Activated naive CD8-positive, alpha-beta T cell treated with anti-CD3 and anti-CD28 coated beads, Interleukin-2, amount 10 ng/mL, durations not matched to agents 7 days and 5 days (primary cell): ENCODE measurements at regions of chr17 and their contacts with region 1.

Region 1: GRCh38 chr17:76726231-76726775 is at the start of gene JMJD6:
- DNase-seq: no peak
- ATAC-seq: peak; percentile 83
- H3K4me3 Mint-ChIP-seq: peak within 1 kb of the TSS; percentile 99
- H3K27ac Mint-ChIP-seq: peak within 1 kb of the TSS; percentile 99
- H3K4me1 Mint-ChIP-seq: peaks cover 38% of the 10 kb centered on the region
- H3K27me3 Mint-ChIP-seq: no peaks in the 10 kb centered on the region
- total RNA-seq, gene JMJD6: 55.0 to 58.9 TPM

Region 2: GRCh38 chr17:76671123-76671911 is 55.0 kb before region 1 on chr17:
- POLR2A ChIA-PET with region 1: interaction called, 12 read pairs
- DNase-seq: peak; percentile 97
- ATAC-seq: peak; percentile 99
- H3K4me3 Mint-ChIP-seq: peak overlapping the region; percentile 89
- H3K27ac Mint-ChIP-seq: peak overlapping the region; percentile 96
- H3K4me1 Mint-ChIP-seq: peaks cover 32% of the 10 kb centered on the region
- H3K27me3 Mint-ChIP-seq: peaks cover 2% of the 10 kb centered on the region

Region 3: DNA sequence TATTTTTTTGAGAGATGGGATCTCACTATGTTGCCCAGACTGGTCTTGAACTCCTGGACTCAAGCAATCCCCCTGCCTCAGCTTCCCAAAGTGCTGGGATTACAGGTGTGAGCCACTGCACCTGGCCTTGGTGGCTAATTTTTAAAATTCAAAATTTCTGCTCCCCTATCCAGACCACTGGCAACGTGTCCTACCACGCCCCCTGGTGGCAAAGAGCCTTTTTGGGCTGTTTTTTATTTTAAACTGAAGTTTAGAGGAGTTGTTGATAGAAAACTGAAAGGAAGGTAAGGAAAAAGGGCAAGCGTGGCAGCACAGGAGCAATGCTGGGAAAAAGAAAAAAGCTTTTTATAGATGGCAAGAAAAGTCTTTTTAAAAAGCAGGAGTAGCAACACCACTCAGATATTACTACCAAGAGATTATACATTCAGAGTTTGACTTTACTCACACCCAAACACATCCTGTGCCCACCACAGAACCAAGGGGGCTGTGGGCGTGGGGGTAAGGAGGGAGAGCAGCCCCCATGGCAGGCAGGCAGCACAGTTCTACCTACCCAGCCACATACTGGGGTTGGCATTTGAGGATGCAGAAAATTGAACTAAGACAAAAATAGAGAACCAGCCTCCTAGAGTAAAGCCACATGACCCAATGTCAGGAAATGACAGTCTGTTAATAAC is 11.3 kb before region 1 on chr17:
- POLR2A ChIA-PET with region 1: interaction called, 52 read pairs
- DNase-seq: peak; percentile 77
- ATAC-seq: no peak
- H3K4me3 Mint-ChIP-seq: peak overlapping the region; percentile 77
- H3K27ac Mint-ChIP-seq: peak overlapping the region; percentile 94
- H3K4me1 Mint-ChIP-seq: peaks cover 55% of the 10 kb centered on the region
- H3K27me3 Mint-ChIP-seq: no peaks in the 10 kb centered on the region

Region 4: GRCh38 chr17:76753061-76753961 is 27.0 kb after region 1 on chr17:
- POLR2A ChIA-PET with region 1: interaction called, 13 read pairs
- DNase-seq: peak; percentile 42
- ATAC-seq: peak; percentile 57
- H3K4me3 Mint-ChIP-seq: peak overlapping the region; percentile 87
- H3K27ac Mint-ChIP-seq: peak overlapping the region; percentile 97
- H3K4me1 Mint-ChIP-seq: peaks cover 30% of the 10 kb centered on the region
- H3K27me3 Mint-ChIP-seq: no peaks in the 10 kb centered on the region